ENCODE measurements at regions of chr2 and their contacts with region 1.

Region 1: DNA sequence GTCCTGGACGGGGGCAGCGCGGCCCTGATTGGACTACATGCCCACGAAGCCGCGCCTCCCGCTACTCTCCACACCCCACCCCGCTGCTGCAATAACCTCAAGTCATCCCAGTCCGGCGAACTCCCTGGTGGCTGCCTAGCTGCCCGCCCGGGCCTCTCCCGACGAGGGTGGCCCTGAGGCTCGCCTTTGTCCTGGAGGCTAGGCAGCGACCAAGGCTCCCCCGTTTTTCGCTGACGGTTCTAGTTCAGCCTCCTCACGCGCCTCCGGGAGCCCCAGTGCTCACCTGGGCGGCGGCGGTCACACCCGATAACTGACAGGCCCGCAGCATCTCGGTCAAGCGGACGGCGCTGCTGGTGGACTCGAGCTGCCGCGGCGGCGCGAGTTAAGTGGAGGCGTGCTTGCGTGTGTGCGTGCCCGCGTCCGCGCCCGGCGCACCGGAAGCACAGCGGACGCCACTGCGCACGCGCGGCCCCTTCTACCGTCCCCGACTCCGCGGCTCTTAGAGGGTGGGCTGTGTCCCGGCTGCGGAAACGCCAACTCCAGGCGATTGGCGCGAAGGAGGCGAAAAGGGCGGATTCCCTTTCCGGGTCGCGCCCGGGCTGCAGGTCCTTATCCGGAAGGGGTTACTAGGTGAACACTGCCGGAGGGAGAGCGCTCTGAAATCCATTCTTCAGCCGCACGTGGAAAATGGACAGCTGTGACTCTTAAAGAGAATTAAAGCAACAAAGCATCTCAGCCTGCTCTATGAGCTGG is at the start of gene IMMT:
- DNase-seq: peak; percentile 94
- CTCF ChIP-seq: no peak

Region 2: GRCh38 chr2:86170449-86170848 is 24.8 kb before region 1 on chr2:
- CTCF ChIA-PET with region 1: no interaction called
- POLR2A ChIA-PET with region 1: no interaction called
- DNase-seq: no peak
- CTCF ChIP-seq: no peak

Region 3: GRCh38 chr2:86314125-86314524 is 118.9 kb after region 1 on chr2:
- CTCF ChIA-PET with region 1: no interaction called
- POLR2A ChIA-PET with region 1: interaction called, 10 read pairs
- DNase-seq: no peak
- CTCF ChIP-seq: no peak

Region 4: DNA sequence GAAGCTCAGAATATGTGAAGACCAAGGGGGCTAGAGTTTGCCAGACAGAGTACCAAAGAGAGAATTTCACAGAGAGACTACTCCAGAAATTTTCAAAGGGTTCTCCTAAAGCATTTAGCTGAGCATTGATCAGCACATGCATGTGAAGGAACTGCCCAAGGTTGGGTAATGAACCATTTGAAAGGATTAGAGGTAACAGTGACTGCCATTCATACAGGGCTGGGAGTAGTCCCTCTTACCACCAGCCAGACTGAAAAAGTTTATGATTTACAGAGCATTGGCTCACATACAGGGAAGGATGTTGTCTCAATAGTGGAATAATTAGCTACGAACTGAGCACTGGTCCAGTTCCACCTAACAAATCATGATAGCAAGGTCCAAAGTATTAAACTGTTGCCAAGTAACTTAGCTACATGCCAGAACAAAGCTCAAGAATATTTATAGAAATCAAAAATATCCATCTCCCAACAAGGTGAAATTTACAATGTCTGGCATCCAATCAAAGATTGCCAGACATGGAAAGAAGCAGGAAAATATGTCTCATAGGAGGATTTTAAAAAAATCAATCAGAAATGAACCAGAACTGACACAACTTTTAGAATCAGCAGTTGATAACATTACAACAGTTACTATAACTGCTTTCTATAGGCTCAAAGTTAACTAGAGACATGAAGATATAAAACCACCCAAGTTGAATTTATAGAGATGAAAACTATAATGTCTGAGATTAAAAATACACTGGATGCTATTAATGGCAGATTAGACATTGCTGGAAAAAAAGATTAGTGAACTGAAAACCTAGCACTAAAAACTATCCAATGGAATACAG is 454.1 kb after region 1 on chr2:
- CTCF ChIA-PET with region 1: no interaction called
- POLR2A ChIA-PET with region 1: no interaction called
- DNase-seq: no peak
- CTCF ChIP-seq: no peak

Measured in GM10248 (cell line).